ENCODE measurements at regions of chr18 and their contacts with region 1.

Region 1: DNA sequence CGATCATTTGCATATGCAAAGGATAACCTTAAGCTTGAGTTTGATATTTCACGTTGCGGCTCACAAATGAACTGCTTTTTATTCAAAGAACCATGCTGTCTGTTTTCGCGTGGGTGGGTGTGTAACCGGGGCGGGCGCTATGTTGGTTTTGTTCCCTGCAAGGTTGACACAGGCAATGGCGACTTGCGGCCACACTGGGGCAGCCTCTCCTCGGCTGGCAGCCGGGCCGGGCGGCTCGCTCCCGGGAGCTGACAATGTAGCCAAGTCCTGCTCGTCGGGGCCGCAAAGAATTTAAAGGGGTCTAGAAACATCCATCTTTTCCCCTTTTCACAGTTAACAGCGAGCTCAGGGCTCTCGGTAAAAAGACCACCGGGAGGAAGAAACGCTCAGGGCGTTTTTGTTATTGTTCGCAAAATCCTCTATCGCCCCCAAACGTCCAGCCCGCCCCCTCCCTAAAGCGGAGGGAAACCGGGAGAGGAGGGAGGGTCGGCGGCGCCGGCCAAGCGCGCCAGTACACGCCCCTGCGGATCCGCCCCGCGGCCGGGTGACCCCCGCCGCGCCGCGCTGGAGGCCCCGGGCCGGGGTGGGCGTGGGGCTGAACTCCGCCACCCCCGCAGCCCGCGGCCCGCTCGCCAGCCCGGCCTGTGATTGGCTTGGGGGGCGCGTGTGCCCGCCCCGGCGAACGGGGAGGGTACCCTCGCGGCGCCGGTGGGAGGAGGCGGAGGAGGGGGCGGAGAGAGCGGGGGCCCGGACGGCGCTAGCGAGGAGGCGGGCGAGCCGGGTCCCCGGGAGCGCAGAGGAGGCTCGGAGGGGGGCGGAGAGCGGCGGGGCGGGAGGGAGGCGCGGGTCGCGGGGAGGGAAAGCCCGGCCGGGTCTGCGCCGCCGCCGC is at the start of gene NEDD4L:
- DNase-seq: peak; percentile 44 to 87 (median 78)
- ATAC-seq: peak; percentile 71
- H3K4me3 ChIP-seq: peak within 1 kb of the TSS; percentile 65 to 91
- H3K4me3 Mint-ChIP-seq: peak within 1 kb of the TSS; percentile 96
- H3K27ac ChIP-seq: peak within 1 kb of the TSS in 1 of 2 experiments; percentile 53
- H3K27ac Mint-ChIP-seq: peak within 1 kb of the TSS; percentile 70
- H3K4me1 ChIP-seq: peaks cover 15% of the 10 kb centered on the region
- H3K4me1 Mint-ChIP-seq: peaks cover 28% of the 10 kb centered on the region
- H3K27me3 ChIP-seq: no peaks in the 10 kb centered on the region
- H3K27me3 Mint-ChIP-seq: peaks cover 9% of the 10 kb centered on the region
- CTCF ChIP-seq: peak; percentile 38
- total RNA-seq, gene NEDD4L: 10.0 to 10.9 TPM

Region 2: DNA sequence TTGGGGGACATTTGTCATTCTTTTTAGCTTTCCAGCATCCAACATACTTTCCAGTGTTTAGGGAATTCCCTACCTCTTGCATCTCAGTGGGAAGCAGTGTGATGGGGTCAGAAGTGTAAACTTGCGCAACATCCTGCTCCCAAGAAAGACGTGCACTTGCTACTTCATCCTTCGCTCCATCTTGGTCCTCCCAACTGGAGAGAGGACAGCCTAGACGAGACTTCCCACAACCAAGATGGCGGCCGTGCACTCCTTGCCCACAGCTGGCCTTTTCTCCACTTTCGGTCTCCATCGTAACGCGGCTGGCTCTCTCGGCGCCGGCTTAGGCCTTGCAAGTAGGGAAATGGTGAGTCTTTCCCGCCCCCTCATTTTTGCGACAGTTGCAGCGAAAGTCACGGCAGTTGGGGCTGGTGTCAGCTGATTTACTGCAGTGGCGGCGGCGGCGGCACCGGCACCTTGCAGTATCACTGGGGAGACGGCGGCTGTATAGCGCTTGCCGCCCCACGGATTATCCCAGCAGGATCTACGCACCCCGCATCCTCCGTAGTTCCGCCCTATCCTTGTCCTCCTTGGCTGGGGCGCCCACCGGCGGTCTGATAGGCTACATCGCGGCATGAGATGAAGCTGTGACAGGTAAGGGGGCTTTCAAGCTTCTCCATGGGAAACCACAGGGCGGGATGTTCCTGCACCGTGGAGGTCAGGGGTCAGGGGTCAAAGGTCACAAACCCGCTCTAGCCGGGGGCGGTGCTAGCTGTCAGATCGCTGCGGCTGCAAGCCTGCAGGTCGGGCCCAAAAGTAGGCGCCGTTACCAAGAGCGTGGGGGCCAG is 1392.6 kb before region 1 on chr18 and contains the start of gene WDR7:
- CTCF ChIA-PET with region 1: no interaction called
- POLR2A ChIA-PET with region 1: no interaction called
- intact Hi-C with region 1: loop called in 1 of 2 experiments (anchors 2 kb)
- DNase-seq: peak; percentile 89 to 99 (median 93)
- ATAC-seq: peak; percentile 88
- H3K4me3 ChIP-seq: peak within 1 kb of the TSS; percentile 87 to 90
- H3K4me3 Mint-ChIP-seq: peak within 1 kb of the TSS; percentile 93
- H3K27ac ChIP-seq: peak within 1 kb of the TSS; percentile 69 to 82
- H3K27ac Mint-ChIP-seq: peak within 1 kb of the TSS; percentile 96
- H3K4me1 ChIP-seq: peaks cover 31% of the 10 kb centered on the region
- H3K4me1 Mint-ChIP-seq: peaks cover 54% of the 10 kb centered on the region
- H3K27me3 ChIP-seq: no peaks in the 10 kb centered on the region
- H3K27me3 Mint-ChIP-seq: no peaks in the 10 kb centered on the region
- CTCF ChIP-seq: no peak
- total RNA-seq, gene WDR7: 21.0 to 22.1 TPM

Region 3: DNA sequence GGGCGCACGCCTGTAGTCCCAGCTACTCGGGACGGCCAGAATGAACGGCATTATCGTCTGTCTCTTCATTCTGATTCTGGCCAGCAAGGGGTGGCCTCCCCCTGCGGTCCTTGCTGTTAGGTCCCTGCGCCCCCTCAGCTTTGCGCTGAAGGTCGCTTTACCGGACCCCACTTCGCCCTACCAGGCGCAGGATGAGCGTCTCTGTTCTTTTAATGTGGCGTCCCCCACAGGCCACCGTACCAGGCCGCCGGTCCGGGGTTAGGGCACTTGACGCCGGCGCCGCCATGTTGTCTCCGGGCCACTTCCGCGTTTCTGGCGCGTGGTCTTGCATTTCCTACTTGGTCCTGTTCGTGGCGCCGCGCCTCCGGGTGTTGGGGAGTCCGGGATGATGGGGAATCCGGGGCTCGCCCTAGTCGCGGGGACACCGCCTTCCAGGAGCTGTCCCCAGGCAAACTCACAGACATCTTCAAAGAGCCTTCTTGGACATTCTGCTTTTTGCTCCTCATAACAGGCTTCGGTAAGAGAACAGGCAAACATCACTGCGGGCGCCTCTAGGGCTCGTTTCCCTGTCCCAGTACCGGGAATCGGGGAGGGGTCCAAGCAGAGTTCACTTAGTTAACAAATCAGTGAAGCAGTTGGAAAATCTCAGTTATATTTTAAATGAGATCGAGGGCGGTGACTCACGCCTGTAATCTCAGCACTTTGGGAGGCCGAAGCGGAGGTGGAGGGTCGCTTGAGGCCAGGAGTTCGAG is 413.6 kb before region 1 on chr18:
- CTCF ChIA-PET with region 1: no interaction called
- POLR2A ChIA-PET with region 1: no interaction called
- intact Hi-C with region 1: loop called in 1 of 2 experiments (anchors 1 kb)
- DNase-seq: peak; percentile 86 to 96 (median 95)
- ATAC-seq: peak; percentile 99
- H3K4me3 ChIP-seq: peak overlapping the region; percentile 71 to 90
- H3K4me3 Mint-ChIP-seq: peak overlapping the region; percentile 97
- H3K27ac ChIP-seq: peak overlapping the region; percentile 46 to 59
- H3K27ac Mint-ChIP-seq: peak overlapping the region; percentile 92
- H3K4me1 ChIP-seq: peaks cover 15% of the 10 kb centered on the region
- H3K4me1 Mint-ChIP-seq: peaks cover 16% of the 10 kb centered on the region
- H3K27me3 ChIP-seq: no peaks in the 10 kb centered on the region
- H3K27me3 Mint-ChIP-seq: no peaks in the 10 kb centered on the region
- CTCF ChIP-seq: peak; percentile 70

Region 4: DNA sequence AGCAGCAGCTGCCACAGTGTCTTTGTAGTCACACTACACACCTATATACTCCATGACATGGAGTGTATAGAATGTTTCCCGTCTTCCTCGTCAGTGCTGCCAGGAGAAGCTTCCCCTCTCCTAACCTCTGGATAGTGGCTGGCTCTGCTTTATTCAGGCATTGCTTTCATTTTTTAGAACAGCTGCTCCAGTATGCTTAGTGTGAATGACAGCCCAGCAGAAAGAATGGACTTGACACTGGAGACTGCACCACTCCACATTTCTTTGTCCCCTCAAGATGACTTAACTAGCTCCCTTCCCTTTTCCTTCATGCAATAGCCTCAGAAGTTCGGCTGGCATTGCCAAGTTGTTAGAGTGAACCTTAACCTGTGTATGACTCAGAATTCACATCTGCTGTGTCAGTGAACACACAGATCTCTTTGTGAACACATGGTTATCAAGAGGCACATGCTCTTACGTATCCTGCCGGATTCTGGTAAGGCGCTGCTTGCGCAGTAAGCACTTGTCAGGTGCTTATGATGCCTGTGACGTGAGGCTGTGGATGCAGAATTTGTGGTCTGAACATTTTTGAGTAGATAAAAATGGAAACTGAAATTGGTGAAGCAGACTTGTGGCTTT is 74.2 kb after region 1 on chr18:
- CTCF ChIA-PET with region 1: interaction called, 11 read pairs
- POLR2A ChIA-PET with region 1: interaction called, 3 read pairs
- intact Hi-C with region 1: loop called (anchors 1 kb)
- DNase-seq: no peak
- ATAC-seq: no peak
- H3K4me3 ChIP-seq: no peak overlapping the region
- H3K4me3 Mint-ChIP-seq: no peak overlapping the region
- H3K27ac ChIP-seq: no peak overlapping the region
- H3K27ac Mint-ChIP-seq: no peak overlapping the region
- H3K4me1 ChIP-seq: no peaks in the 10 kb centered on the region
- H3K4me1 Mint-ChIP-seq: peaks cover 4% of the 10 kb centered on the region
- H3K27me3 ChIP-seq: no peaks in the 10 kb centered on the region
- H3K27me3 Mint-ChIP-seq: no peaks in the 10 kb centered on the region
- CTCF ChIP-seq: no peak

Region 5: DNA sequence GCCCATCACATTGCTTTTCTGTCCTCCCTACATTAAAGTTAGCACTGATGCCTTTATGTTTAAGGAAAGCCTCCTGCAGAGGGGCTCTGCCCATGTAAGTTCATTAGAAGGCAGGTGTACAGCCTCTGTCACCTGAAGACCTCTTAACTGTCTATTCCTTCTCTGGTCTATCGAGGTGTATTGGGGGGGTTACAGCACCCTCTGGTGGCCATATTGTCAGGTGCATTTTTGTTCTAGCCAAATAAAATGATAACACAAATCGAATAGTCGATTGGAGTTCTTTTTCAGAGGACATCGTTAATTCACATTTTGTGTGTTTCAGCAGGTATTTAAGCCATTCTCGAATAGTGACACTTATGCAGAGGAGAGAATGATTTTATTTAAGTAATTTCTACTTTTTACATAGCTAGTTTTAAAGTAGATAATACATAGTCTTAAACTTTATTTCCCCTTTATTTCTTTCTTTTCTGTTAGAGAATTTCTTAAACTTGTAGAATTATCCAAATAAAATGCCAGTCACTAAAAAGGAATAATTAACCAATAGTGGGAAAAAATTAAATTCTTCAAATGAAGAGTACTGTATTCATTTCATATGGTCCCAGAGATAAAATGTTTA is 137.1 kb after region 1 on chr18:
- CTCF ChIA-PET with region 1: interaction called, 5 read pairs
- POLR2A ChIA-PET with region 1: no interaction called
- intact Hi-C with region 1: loop called (anchors 1 to 2 kb)
- DNase-seq: peak; percentile 25 to 75 (median 62)
- ATAC-seq: peak; percentile 52
- H3K4me3 ChIP-seq: no peak overlapping the region
- H3K4me3 Mint-ChIP-seq: no peak overlapping the region
- H3K27ac ChIP-seq: no peak overlapping the region
- H3K27ac Mint-ChIP-seq: no peak overlapping the region
- H3K4me1 ChIP-seq: no peaks in the 10 kb centered on the region
- H3K4me1 Mint-ChIP-seq: no peaks in the 10 kb centered on the region
- H3K27me3 ChIP-seq: no peaks in the 10 kb centered on the region
- H3K27me3 Mint-ChIP-seq: peaks cover 2% of the 10 kb centered on the region
- CTCF ChIP-seq: peak; percentile 97

Region 6: DNA sequence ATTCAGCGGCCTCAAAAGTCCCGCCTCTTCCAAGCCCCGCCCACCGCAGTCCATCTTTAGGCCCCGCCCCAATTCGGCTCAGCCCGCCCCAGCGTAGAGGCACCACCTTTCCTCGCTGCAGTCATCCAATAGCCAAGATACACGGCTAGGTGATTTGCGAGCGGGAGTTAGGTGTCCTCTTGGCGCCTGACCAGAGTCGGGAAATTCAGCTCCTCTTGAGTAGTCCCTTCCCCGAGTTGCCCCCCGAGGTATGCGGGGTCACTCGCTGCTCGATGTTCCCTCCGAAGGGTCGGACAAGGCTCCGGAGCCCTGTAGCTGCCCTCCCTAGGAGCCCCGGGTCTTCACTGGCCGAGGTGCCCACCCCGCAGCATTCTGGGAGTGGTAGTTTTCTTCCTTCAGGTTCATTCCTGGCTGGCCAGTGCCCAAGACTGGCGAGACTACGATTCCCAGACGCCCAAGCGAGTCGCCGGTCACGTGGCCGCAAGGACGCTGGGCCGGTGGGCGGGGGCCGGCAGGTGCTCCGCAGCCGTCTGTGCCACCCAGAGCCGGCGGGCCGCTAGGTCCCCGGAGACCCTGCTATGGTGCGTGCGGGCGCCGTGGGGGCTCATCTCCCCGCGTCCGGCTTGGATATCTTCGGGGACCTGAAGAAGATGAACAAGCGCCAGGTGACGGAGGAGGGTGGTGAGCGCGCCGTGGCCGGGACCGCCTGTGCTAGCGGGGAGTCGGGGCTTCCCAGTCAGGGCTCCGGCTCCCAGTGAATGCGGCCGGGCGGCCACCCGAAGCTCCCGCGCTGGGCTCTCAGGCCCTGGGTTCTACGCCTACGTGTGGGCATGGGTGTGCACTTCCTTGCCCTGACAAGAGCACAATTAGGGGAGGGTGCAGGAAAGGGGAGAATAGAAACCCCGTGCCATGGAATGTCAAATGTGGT is 1095.9 kb after region 1 on chr18 and contains the start of gene SEC11C:
- CTCF ChIA-PET with region 1: no interaction called
- POLR2A ChIA-PET with region 1: no interaction called
- intact Hi-C with region 1: loop called (anchors 2 to 5 kb)
- DNase-seq: peak; percentile 91 to 98 (median 96)
- ATAC-seq: peak; percentile 90
- H3K4me3 ChIP-seq: peak within 1 kb of the TSS; percentile 92 to 99
- H3K4me3 Mint-ChIP-seq: peak within 1 kb of the TSS; percentile 94
- H3K27ac ChIP-seq: peak within 1 kb of the TSS; percentile 98 to 100
- H3K27ac Mint-ChIP-seq: peak within 1 kb of the TSS; percentile 100
- H3K4me1 ChIP-seq: peaks cover 19% of the 10 kb centered on the region
- H3K4me1 Mint-ChIP-seq: peaks cover 42% of the 10 kb centered on the region
- H3K27me3 ChIP-seq: no peaks in the 10 kb centered on the region
- H3K27me3 Mint-ChIP-seq: peaks cover 9% of the 10 kb centered on the region
- CTCF ChIP-seq: no peak
- total RNA-seq, gene SEC11C: 33.8 to 38.5 TPM

Measured in CD8-positive, alpha-beta T cell (primary cell).